ENCODE measurements at regions of chr6 and their contacts with region 1.

Region 1: DNA sequence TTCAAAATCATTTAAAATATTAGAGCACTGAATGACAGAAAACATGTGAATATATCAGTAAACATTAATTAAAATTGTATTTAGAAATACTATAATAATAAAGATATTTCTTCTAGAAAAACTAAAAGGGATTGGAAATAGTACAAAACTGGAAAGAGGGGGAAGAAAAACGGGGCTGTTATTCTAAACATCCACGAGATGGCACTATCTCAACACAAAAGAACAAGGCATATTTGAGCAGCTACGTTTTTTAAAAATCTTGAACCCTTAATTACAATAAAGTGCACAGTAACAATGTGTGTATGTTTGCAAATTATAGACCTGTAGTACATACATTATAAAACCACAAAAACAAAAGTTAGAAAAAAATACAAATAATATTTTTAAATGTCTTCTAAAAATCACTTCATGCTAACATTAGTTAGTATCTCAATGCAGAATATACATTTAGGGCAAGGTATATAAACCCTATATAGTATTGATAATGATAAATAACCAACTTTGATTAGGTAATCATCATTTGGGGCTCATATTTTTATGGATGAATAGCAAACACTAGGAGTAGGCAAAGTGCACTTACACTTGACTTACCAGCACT is 42.5 kb upstream of the PNISR start:
- DNase-seq: peak in 3 of 14 experiments; percentile 45 to 60 (median 47)
- ATAC-seq: no peak
- H3K4me3 ChIP-seq: no peak overlapping the region
- H3K4me3 Mint-ChIP-seq: no peak overlapping the region
- H3K27ac ChIP-seq: no peak overlapping the region
- H3K27ac Mint-ChIP-seq: no peak overlapping the region
- H3K4me1 ChIP-seq: no peaks in the 10 kb centered on the region
- H3K4me1 Mint-ChIP-seq: no peaks in the 10 kb centered on the region
- H3K27me3 ChIP-seq: no peaks in the 10 kb centered on the region
- H3K27me3 Mint-ChIP-seq: no peaks in the 10 kb centered on the region
- CTCF ChIP-seq: peak; percentile 91

Region 2: DNA sequence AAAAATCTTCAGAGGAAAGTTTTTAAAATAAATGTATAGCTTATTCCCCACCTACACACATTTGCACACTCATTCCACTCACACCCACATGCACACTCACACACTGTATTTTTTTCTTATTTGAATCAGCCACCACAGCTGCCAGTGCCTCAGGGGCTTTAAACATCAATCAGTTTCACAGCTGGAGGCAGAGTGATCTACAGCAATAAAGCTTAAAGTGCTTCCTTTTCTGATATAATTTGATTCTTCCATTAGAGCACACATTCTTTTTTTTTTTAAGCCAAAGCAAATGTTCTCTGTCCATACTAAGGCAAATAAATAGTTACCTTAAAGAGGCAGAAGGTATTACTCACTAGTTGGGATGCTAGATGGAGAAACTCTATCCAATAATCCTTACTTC is 1132.0 kb before region 1 on chr6:
- CTCF ChIA-PET with region 1: no interaction called
- POLR2A ChIA-PET with region 1: no interaction called
- intact Hi-C with region 1: no loop called
- DNase-seq: no peak
- ATAC-seq: no peak
- H3K4me3 ChIP-seq: no peak overlapping the region
- H3K4me3 Mint-ChIP-seq: no peak overlapping the region
- H3K27ac ChIP-seq: no peak overlapping the region
- H3K27ac Mint-ChIP-seq: no peak overlapping the region
- H3K4me1 ChIP-seq: no peaks in the 10 kb centered on the region
- H3K4me1 Mint-ChIP-seq: no peaks in the 10 kb centered on the region
- H3K27me3 ChIP-seq: no peaks in the 10 kb centered on the region
- H3K27me3 Mint-ChIP-seq: no peaks in the 10 kb centered on the region
- CTCF ChIP-seq: no peak

Region 3: GRCh38 chr6:99189823-99190721 is 277.5 kb before region 1 on chr6:
- CTCF ChIA-PET with region 1: no interaction called
- POLR2A ChIA-PET with region 1: no interaction called
- intact Hi-C with region 1: no loop called
- DNase-seq: no peak
- ATAC-seq: no peak
- H3K4me3 ChIP-seq: no peak overlapping the region
- H3K4me3 Mint-ChIP-seq: no peak overlapping the region
- H3K27ac ChIP-seq: no peak overlapping the region
- H3K27ac Mint-ChIP-seq: no peak overlapping the region
- H3K4me1 ChIP-seq: no peaks in the 10 kb centered on the region
- H3K4me1 Mint-ChIP-seq: no peaks in the 10 kb centered on the region
- H3K27me3 ChIP-seq: peaks cover 0 to 4% of the 10 kb centered on the region in 2 experiments
- H3K27me3 Mint-ChIP-seq: peaks cover 16% of the 10 kb centered on the region
- CTCF ChIP-seq: no peak

Region 4: GRCh38 chr6:99409672-99410071 is 57.9 kb before region 1 on chr6:
- CTCF ChIA-PET with region 1: no interaction called
- POLR2A ChIA-PET with region 1: no interaction called
- intact Hi-C with region 1: no loop called
- DNase-seq: no peak
- ATAC-seq: no peak
- H3K4me3 ChIP-seq: no peak overlapping the region
- H3K4me3 Mint-ChIP-seq: no peak overlapping the region
- H3K27ac ChIP-seq: no peak overlapping the region
- H3K27ac Mint-ChIP-seq: no peak overlapping the region
- H3K4me1 ChIP-seq: no peaks in the 10 kb centered on the region
- H3K4me1 Mint-ChIP-seq: peaks cover 35% of the 10 kb centered on the region
- H3K27me3 ChIP-seq: no peaks in the 10 kb centered on the region
- H3K27me3 Mint-ChIP-seq: no peaks in the 10 kb centered on the region
- CTCF ChIP-seq: no peak

Region 5: DNA sequence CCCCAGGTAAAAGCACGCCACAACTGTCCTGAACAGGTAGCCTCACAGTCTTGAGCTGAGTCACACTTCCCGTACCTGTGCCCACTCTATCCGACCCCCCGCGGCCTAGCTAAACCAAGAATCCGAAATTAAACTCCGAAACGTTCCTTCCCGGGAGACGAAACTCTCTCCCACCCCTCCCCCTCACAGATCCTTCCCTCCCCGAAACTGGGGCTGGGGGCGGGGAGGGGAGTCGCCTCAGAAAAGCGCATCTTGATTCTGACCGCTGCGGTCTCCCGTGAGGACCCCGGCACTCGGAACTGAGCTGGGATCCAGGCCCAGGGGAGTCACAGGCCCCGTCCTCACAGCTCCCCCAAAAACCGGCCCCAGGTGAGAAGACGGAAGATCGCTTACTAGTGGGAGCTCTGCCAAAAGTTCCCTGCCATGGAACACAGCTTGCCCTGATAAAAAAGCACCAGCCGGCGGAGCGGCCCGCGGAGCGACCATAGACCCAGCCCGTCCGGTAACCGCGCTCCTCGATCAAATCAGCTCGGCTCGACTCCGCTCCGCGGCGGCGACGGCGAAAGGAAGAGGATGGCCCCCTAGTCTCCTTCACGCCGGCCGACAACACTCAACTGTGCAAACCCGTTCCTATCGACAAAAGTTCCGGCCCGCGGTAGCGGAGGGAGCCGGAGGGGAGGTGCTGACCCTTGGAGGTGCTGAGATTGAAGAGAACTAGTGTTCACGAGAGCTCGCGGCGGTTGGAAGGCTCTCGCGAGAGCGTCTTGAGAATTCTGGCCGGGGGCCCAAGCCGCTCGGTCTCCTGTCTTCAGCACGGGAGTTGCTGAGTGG is 100.7 kb after region 1 on chr6 and contains the start of gene CCNC:
- CTCF ChIA-PET with region 1: no interaction called
- POLR2A ChIA-PET with region 1: no interaction called
- intact Hi-C with region 1: loop called in 1 of 2 experiments (anchors 5 kb)
- DNase-seq: peak; percentile 78 to 94 (median 88)
- ATAC-seq: peak; percentile 90
- H3K4me3 ChIP-seq: peak within 1 kb of the TSS; percentile 88
- H3K4me3 Mint-ChIP-seq: peak within 1 kb of the TSS; percentile 97
- H3K27ac ChIP-seq: peak within 1 kb of the TSS in 1 of 2 donors; percentile 57
- H3K27ac Mint-ChIP-seq: peak within 1 kb of the TSS; percentile 91
- H3K4me1 ChIP-seq: peaks cover 9% of the 10 kb centered on the region
- H3K4me1 Mint-ChIP-seq: peaks cover 47% of the 10 kb centered on the region
- H3K27me3 ChIP-seq: no peaks in the 10 kb centered on the region
- H3K27me3 Mint-ChIP-seq: no peaks in the 10 kb centered on the region
- CTCF ChIP-seq: no peak
- total RNA-seq, gene CCNC: 40.5 to 42.6 TPM

Region 6: GRCh38 chr6:99746261-99746895 is 278.8 kb after region 1 on chr6:
- CTCF ChIA-PET with region 1: interaction called, 12 read pairs
- POLR2A ChIA-PET with region 1: interaction called, 4 read pairs
- intact Hi-C with region 1: loop called (anchors 1 kb)
- DNase-seq: peak in 13 of 14 experiments; percentile 10 to 79 (median 37)
- ATAC-seq: peak; percentile 76
- H3K4me3 ChIP-seq: no peak overlapping the region
- H3K4me3 Mint-ChIP-seq: no peak overlapping the region
- H3K27ac ChIP-seq: no peak overlapping the region
- H3K27ac Mint-ChIP-seq: no peak overlapping the region
- H3K4me1 ChIP-seq: no peaks in the 10 kb centered on the region
- H3K4me1 Mint-ChIP-seq: no peaks in the 10 kb centered on the region
- H3K27me3 ChIP-seq: peaks cover 4 to 12% of the 10 kb centered on the region in 2 experiments
- H3K27me3 Mint-ChIP-seq: peaks cover 59% of the 10 kb centered on the region
- CTCF ChIP-seq: peak; percentile 87

Region 7: GRCh38 chr6:100099189-100100074 is 631.8 kb after region 1 on chr6:
- CTCF ChIA-PET with region 1: no interaction called
- POLR2A ChIA-PET with region 1: no interaction called
- intact Hi-C with region 1: loop called (anchors 5 to 10 kb)
- DNase-seq: peak in 1 of 14 experiments; percentile 15
- ATAC-seq: no peak
- H3K4me3 ChIP-seq: no peak overlapping the region
- H3K4me3 Mint-ChIP-seq: no peak overlapping the region
- H3K27ac ChIP-seq: no peak overlapping the region
- H3K27ac Mint-ChIP-seq: no peak overlapping the region
- H3K4me1 ChIP-seq: no peaks in the 10 kb centered on the region
- H3K4me1 Mint-ChIP-seq: no peaks in the 10 kb centered on the region
- H3K27me3 ChIP-seq: no peaks in the 10 kb centered on the region
- H3K27me3 Mint-ChIP-seq: peaks cover 8% of the 10 kb centered on the region
- CTCF ChIP-seq: peak; percentile 40

Region 8: GRCh38 chr6:100479179-100480035 is 1011.8 kb after region 1 on chr6:
- CTCF ChIA-PET with region 1: no interaction called
- POLR2A ChIA-PET with region 1: no interaction called
- intact Hi-C with region 1: loop called in 1 of 2 experiments (anchors 5 kb)
- DNase-seq: peak in 3 of 14 experiments; percentile 29 to 43 (median 38)
- ATAC-seq: no peak
- H3K4me3 ChIP-seq: no peak overlapping the region
- H3K4me3 Mint-ChIP-seq: no peak overlapping the region
- H3K27ac ChIP-seq: no peak overlapping the region
- H3K27ac Mint-ChIP-seq: no peak overlapping the region
- H3K4me1 ChIP-seq: no peaks in the 10 kb centered on the region
- H3K4me1 Mint-ChIP-seq: no peaks in the 10 kb centered on the region
- H3K27me3 ChIP-seq: peaks cover 0 to 19% of the 10 kb centered on the region in 2 experiments
- H3K27me3 Mint-ChIP-seq: peaks cover 50% of the 10 kb centered on the region
- CTCF ChIP-seq: peak; percentile 41

Region 9: GRCh38 chr6:100664274-100665040 is 1196.8 kb after region 1 on chr6:
- CTCF ChIA-PET with region 1: no interaction called
- POLR2A ChIA-PET with region 1: no interaction called
- intact Hi-C with region 1: loop called in 1 of 2 experiments (anchors 10 kb)
- DNase-seq: peak in 3 of 14 experiments; percentile 35 to 45 (median 43)
- ATAC-seq: peak; percentile 48
- H3K4me3 ChIP-seq: no peak overlapping the region
- H3K4me3 Mint-ChIP-seq: no peak overlapping the region
- H3K27ac ChIP-seq: peak overlapping the region in 1 of 2 donors; percentile 12
- H3K27ac Mint-ChIP-seq: peak overlapping the region; percentile 7
- H3K4me1 ChIP-seq: no peaks in the 10 kb centered on the region
- H3K4me1 Mint-ChIP-seq: peaks cover 10% of the 10 kb centered on the region
- H3K27me3 ChIP-seq: no peaks in the 10 kb centered on the region
- H3K27me3 Mint-ChIP-seq: no peaks in the 10 kb centered on the region
- CTCF ChIP-seq: peak; percentile 77